Activated CD4-positive, alpha-beta T cell treated with anti-CD3 and anti-CD28 coated beads for 36 hours (primary cell): ENCODE measurements at regions of chr17 and their contacts with region 1.

Region 1: GRCh38 chr17:61369463-61370175 is 30.0 kb upstream of the TBX2 start:
- DNase-seq: no peak
- ATAC-seq: no peak
- H3K4me3 Mint-ChIP-seq: no peak overlapping the region
- H3K27ac Mint-ChIP-seq: no peak overlapping the region
- H3K4me1 Mint-ChIP-seq: no peaks in the 10 kb centered on the region
- H3K27me3 Mint-ChIP-seq: no peaks in the 10 kb centered on the region

Region 2: GRCh38 chr17:61118871-61119270 is 250.7 kb before region 1 on chr17:
- CTCF ChIA-PET with region 1: no interaction called
- POLR2A ChIA-PET with region 1: no interaction called
- intact Hi-C with region 1: no loop called
- DNase-seq: no peak
- ATAC-seq: no peak
- H3K4me3 Mint-ChIP-seq: no peak overlapping the region
- H3K27ac Mint-ChIP-seq: no peak overlapping the region
- H3K4me1 Mint-ChIP-seq: peaks cover 7% of the 10 kb centered on the region
- H3K27me3 Mint-ChIP-seq: no peaks in the 10 kb centered on the region

Region 3: DNA sequence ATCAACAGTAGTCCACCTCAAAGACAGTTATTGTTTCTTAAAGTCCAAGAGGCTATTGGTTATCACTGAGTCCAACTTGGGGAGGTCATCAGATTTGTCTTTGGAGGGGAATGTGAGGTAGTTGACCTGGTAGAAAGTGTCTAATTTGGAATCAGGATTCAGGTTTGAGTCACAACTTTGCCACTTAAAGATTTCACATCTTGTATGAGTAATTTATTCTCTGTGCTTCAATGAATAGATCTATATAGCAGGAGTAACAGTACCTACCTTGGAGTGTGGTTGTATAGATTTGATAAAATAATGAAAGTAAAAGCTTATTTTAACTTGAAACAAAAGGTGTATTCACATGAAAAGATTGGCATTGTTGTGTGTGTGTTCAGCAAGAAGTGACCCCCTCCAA is 89.3 kb before region 1 on chr17:
- CTCF ChIA-PET with region 1: no interaction called
- POLR2A ChIA-PET with region 1: interaction called, 10 read pairs
- intact Hi-C with region 1: no loop called
- DNase-seq: no peak
- ATAC-seq: peak; percentile 90
- H3K4me3 Mint-ChIP-seq: no peak overlapping the region
- H3K27ac Mint-ChIP-seq: no peak overlapping the region
- H3K4me1 Mint-ChIP-seq: peaks cover 24% of the 10 kb centered on the region
- H3K27me3 Mint-ChIP-seq: no peaks in the 10 kb centered on the region